ENCODE measurements at regions of chr2 and their contacts with region 1.

Region 1: GRCh38 chr2:56183643-56184499 is at the start of gene CCDC85A:
- DNase-seq: peak; percentile 81
- ATAC-seq: peak; percentile 71 to 94
- H3K4me3 ChIP-seq: peak within 1 kb of the TSS; percentile 58
- H3K27ac ChIP-seq: peak within 1 kb of the TSS; percentile 7 to 67; a peak in 5 of 6 replicates
- H3K4me1 ChIP-seq: no peaks in the 10 kb centered on the region
- CTCF ChIP-seq: peak; percentile 95
- EP300 ChIP-seq: no peak
- POLR2A ChIP-seq: no peak
- RAD21 ChIP-seq: peak; percentile 84 to 96
- polyA plus RNA-seq, gene CCDC85A: 0.03 and 0.05 TPM in 2 replicates

Region 2: GRCh38 chr2:56167616-56168562 is 16.0 kb before region 1 on chr2:
- CTCF ChIA-PET with region 1: interaction called, 62 read pairs
- POLR2A ChIA-PET with region 1: no interaction called
- DNase-seq: no peak
- ATAC-seq: peak in 1 of 2 experiments; percentile 53; a peak in 2 of 6 replicates
- H3K4me3 ChIP-seq: no peak overlapping the region
- H3K27ac ChIP-seq: no peak overlapping the region
- H3K4me1 ChIP-seq: no peaks in the 10 kb centered on the region
- CTCF ChIP-seq: no peak
- EP300 ChIP-seq: no peak
- POLR2A ChIP-seq: no peak
- RAD21 ChIP-seq: no peak

Region 3: GRCh38 chr2:56449002-56449431 is 265.1 kb after region 1 on chr2:
- CTCF ChIA-PET with region 1: interaction called, 10 read pairs
- POLR2A ChIA-PET with region 1: no interaction called
- DNase-seq: peak; percentile 51 to 86
- ATAC-seq: peak; percentile 90 to 92
- H3K4me3 ChIP-seq: peak overlapping the region; percentile 18; the same call in 2 of the 3 replicates
- H3K27ac ChIP-seq: peak overlapping the region; percentile 82 to 92
- H3K4me1 ChIP-seq: peaks cover 39% of the 10 kb centered on the region
- CTCF ChIP-seq: no peak
- EP300 ChIP-seq: peak; percentile 66 to 77; a peak in 3 of 5 replicates
- POLR2A ChIP-seq: no peak
- RAD21 ChIP-seq: no peak; a peak in 2 of 5 replicates

Region 4: GRCh38 chr2:56749152-56749752 is 565.4 kb after region 1 on chr2:
- CTCF ChIA-PET with region 1: interaction called, 22 read pairs
- POLR2A ChIA-PET with region 1: no interaction called
- DNase-seq: peak; percentile 6 to 48
- ATAC-seq: peak in 1 of 2 experiments; percentile 49; a peak in 2 of 6 replicates
- H3K4me3 ChIP-seq: no peak overlapping the region
- H3K27ac ChIP-seq: no peak overlapping the region
- H3K4me1 ChIP-seq: no peaks in the 10 kb centered on the region
- CTCF ChIP-seq: peak; percentile 68
- EP300 ChIP-seq: no peak
- POLR2A ChIP-seq: no peak
- RAD21 ChIP-seq: peak; percentile 76 to 78

Region 5: DNA sequence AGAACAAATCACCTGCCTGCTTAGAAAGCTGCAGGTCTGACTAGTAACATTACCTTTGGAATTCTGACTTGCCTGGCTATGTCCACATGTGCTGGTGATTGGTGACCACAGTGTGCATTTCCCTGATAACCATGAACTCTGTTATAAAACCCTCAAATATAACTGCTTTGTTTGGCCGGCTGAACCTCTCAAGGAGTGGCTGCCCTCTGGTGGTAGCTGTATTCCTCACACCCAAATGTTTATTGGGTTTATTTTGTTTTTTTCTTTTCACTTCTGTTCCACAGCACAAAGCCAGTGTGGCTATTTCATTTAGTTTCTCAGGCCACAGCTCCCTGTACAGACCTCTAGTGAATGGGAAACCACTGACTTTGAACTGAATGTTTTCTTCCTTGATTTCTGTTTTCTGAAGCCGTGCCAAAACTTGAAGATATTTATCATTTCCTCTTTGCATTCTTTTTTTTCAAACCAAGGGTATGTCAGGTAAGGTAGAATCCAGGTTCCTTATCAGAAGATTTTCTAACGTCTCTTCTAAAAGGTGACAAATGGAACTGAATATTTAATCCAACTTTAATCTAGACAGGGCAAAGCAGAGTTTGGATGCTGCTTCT is 1313.7 kb after region 1 on chr2:
- CTCF ChIA-PET with region 1: interaction called, 88 read pairs
- POLR2A ChIA-PET with region 1: no interaction called
- DNase-seq: peak; percentile 16 to 64
- ATAC-seq: peak; percentile 85 to 86; a peak in 5 of 6 replicates
- H3K4me3 ChIP-seq: no peak overlapping the region
- H3K27ac ChIP-seq: no peak overlapping the region
- H3K4me1 ChIP-seq: no peaks in the 10 kb centered on the region
- CTCF ChIP-seq: peak; percentile 93
- EP300 ChIP-seq: no peak
- POLR2A ChIP-seq: no peak
- RAD21 ChIP-seq: peak; percentile 85 to 91

Region 6: GRCh38 chr2:57510704-57511103 is 1326.8 kb after region 1 on chr2:
- CTCF ChIA-PET with region 1: interaction called, 11 read pairs
- POLR2A ChIA-PET with region 1: no interaction called
- DNase-seq: no peak
- ATAC-seq: peak in 1 of 2 experiments; percentile 55; a peak in 2 of 6 replicates
- H3K4me3 ChIP-seq: no peak overlapping the region
- H3K27ac ChIP-seq: no peak overlapping the region
- H3K4me1 ChIP-seq: no peaks in the 10 kb centered on the region
- CTCF ChIP-seq: no peak
- EP300 ChIP-seq: no peak
- POLR2A ChIP-seq: no peak
- RAD21 ChIP-seq: no peak

Region 7: DNA sequence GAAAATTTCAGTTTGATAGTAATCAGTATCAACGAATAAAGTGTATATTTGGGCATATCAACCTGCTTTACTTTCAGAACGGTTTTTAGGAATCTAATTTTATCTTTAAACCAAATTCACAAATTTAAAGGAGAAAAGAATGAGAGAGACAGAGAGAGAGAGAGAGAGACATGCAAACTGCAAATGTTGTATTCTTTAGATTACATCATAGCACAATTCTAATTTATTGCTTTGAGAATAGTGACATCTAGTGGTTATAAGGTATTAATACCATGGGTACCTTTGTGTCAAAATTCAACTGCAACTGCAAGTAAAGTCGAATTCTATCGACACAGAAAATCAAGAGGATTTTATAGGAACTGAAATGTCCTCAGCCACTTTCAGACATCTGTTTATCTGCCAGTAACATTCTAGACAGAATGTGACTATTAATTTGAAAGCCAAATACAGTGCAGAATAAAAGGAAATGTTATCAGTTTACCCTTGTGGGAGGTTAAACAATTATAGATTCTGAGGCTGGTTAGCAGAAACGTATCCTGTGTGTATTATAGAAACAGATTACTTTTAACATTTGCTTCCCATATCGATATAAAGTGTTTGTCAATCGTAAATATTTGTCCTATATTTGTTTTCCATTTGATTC is 1332.9 kb after region 1 on chr2:
- CTCF ChIA-PET with region 1: interaction called, 20 read pairs
- POLR2A ChIA-PET with region 1: no interaction called
- DNase-seq: peak; percentile 28 to 57
- ATAC-seq: peak; percentile 76 to 78; a peak in 4 of 6 replicates
- H3K4me3 ChIP-seq: no peak overlapping the region
- H3K27ac ChIP-seq: no peak overlapping the region
- H3K4me1 ChIP-seq: no peaks in the 10 kb centered on the region
- CTCF ChIP-seq: peak; percentile 85
- EP300 ChIP-seq: no peak
- POLR2A ChIP-seq: no peak
- RAD21 ChIP-seq: peak; percentile 83 to 90